ENCODE measurements at regions of chr11 and their contacts with region 1.

Region 1: DNA sequence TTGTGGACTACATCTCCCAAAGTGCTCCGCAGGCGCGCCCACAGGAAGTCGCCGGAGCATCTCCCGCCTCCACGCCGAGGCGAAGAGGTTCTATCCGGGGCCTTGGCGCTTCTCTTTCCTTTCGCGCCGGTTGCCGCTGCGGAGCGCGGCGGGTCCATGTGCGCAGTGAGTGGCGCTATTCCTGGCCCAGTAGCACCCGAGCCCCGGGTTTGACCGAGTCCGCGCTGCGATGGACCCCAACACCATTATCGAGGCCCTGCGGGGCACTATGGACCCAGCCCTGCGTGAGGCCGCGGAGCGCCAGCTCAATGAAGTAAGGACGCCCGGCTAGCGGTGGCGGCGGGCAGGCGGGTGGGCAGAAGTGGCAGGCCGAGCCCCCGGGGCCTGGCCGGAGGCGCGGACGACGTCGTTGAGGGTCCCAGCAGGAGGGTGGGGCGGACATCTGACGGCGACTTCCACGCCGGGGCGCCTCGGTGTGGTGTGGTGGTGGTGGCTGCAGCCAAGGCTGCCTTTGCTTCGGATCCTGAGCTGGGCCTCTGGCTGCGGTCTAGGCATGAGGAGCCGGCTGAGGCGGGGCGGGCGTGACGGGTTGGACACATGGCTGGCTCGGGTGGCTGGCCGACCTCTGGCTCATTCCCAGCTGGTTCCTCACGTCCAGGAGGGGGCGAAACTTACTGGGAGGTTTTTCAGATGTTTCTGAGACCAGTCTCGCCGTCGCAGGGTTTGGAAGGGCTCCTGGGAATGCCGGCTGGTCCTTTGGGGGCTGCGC is at the start of gene IPO7:
- DNase-seq: peak; percentile 90 to 95 (median 94)
- ATAC-seq: peak; percentile 92 to 97 (median 96)
- H3K4me3 ChIP-seq: peak within 1 kb of the TSS; percentile 74 to 96 (median 89)
- H3K27ac ChIP-seq: peak within 1 kb of the TSS; percentile 72 to 97 (median 95)
- H3K4me1 ChIP-seq: peaks cover 0 to 42% (median 20%) of the 10 kb centered on the region in 12 donors
- H3K27me3 ChIP-seq: no peaks in the 10 kb centered on the region
- CTCF ChIP-seq: peak in 6 of 12 donors; percentile 15 to 49 (median 35)
- POLR2A ChIP-seq: peak in 1 of 2 donors; percentile 77
- total RNA-seq, gene IPO7: 71.7 to 200 (median 141) TPM

Region 2: GRCh38 chr11:9203691-9204311 is 180.9 kb before region 1 on chr11:
- intact Hi-C with region 1: loop called in 2 of 10 experiments (anchors 10 kb)
- DNase-seq: peak in 1 of 5 donors; percentile 33
- ATAC-seq: peak; percentile 45 to 74 (median 60)
- H3K4me3 ChIP-seq: no peak overlapping the region
- H3K27ac ChIP-seq: no peak overlapping the region
- H3K4me1 ChIP-seq: peaks cover 0 to 82% (median 29%) of the 10 kb centered on the region in 12 donors
- H3K27me3 ChIP-seq: no peaks in the 10 kb centered on the region
- CTCF ChIP-seq: peak in 8 of 12 donors; percentile 21 to 53 (median 36)
- POLR2A ChIP-seq: no peak

Measured in heart left ventricle (tissue), 16 donors.